ENCODE measurements at regions of chr17 and their contacts with region 1.

Region 1: GRCh38 chr17:7740481-7741001 is 23.0 kb downstream of the DNAH2 start:
- DNase-seq: no peak
- ATAC-seq: no peak
- H3K4me3 ChIP-seq: no peak overlapping the region
- H3K27ac ChIP-seq: no peak overlapping the region
- H3K4me1 ChIP-seq: peaks cover 5% of the 10 kb centered on the region; the same call in 1 of the 2 replicates
- H3K27me3 ChIP-seq: peaks cover 43% of the 10 kb centered on the region
- CTCF ChIP-seq: no peak
- POLR2A ChIP-seq: no peak
- RAD21 ChIP-seq: no peak

Region 2: DNA sequence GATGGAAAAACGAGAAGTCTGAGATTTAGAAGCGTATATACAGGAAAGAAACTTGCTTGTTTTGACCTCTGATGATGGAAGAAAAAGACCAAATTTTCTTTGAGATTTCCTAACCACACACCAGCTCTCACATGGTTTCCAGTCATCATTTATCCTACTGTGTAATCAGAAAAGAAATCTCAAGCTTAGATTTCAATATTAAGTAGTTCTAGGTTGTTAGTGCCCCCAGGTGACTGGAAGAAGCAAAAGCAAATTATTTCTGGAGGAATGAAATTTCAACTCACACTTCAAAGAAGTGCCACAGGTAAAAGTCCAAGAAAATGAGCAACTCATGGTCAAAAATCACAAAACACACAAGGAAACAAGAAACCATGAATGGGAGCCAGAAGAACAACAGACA is 41.7 kb after region 1 on chr17:
- CTCF ChIA-PET with region 1: interaction called, 34 read pairs
- POLR2A ChIA-PET with region 1: no interaction called
- dilution Hi-C with region 1: no loop called
- in situ Hi-C with region 1: loop called (anchors 5 kb)
- intact Hi-C with region 1: loop called (anchors 1 kb)
- DNase-seq: peak; percentile 61
- ATAC-seq: peak; percentile 56; the same call in 1 of the 2 replicates
- H3K4me3 ChIP-seq: no peak overlapping the region
- H3K27ac ChIP-seq: no peak overlapping the region
- H3K4me1 ChIP-seq: peaks cover 2% of the 10 kb centered on the region; the same call in 1 of the 2 replicates
- H3K27me3 ChIP-seq: peaks cover 19% of the 10 kb centered on the region
- CTCF ChIP-seq: peak; percentile 64
- POLR2A ChIP-seq: no peak
- RAD21 ChIP-seq: peak; percentile 66

Region 3: DNA sequence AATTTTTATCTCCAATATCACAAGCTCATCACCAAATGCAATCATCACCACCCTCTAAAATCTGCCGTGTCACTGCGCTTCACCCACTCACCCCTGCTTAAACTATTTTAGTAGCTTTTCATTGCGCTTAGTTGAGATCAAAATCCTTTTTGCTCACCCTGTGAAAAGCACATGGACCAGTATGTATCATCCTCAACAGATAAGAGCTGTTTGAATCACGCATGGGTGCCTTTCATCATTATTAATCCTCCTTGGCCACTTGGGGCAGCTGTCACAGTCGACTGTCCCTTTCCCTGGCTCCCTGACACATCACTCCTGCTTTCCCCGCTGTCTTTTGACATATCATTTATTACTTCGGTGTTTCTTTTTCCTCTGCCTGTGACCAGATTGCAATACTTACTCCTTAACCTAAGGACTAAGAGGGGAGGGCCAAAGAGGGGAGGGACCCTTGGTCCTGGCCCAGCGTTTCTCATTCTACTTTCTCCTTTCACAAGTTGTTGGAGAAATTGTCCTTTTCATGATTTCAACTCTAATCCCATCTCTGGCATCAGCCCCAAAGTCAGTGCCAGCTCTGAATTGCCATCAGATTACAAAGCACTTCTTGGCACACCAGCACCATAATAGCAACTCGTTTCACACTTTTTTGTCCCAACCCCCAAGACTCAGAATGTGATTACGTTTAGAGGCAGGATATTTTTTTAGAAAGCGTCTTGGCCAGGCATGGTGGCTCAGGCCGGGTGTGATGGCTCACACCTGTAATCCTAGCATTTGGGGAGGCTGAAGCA is 84.9 kb after region 1 on chr17:
- CTCF ChIA-PET with region 1: no interaction called
- POLR2A ChIA-PET with region 1: no interaction called
- dilution Hi-C with region 1: no loop called
- in situ Hi-C with region 1: loop called (anchors 5 kb)
- intact Hi-C with region 1: loop called (anchors 1 kb)
- DNase-seq: no peak
- ATAC-seq: peak; percentile 35
- H3K4me3 ChIP-seq: no peak overlapping the region
- H3K27ac ChIP-seq: no peak overlapping the region
- H3K4me1 ChIP-seq: no peaks in the 10 kb centered on the region; the same call in 1 of the 2 replicates
- H3K27me3 ChIP-seq: peaks cover 13% of the 10 kb centered on the region
- CTCF ChIP-seq: no peak
- POLR2A ChIP-seq: no peak
- RAD21 ChIP-seq: peak; percentile 21; the same call in 1 of the 2 replicates

Region 4: DNA sequence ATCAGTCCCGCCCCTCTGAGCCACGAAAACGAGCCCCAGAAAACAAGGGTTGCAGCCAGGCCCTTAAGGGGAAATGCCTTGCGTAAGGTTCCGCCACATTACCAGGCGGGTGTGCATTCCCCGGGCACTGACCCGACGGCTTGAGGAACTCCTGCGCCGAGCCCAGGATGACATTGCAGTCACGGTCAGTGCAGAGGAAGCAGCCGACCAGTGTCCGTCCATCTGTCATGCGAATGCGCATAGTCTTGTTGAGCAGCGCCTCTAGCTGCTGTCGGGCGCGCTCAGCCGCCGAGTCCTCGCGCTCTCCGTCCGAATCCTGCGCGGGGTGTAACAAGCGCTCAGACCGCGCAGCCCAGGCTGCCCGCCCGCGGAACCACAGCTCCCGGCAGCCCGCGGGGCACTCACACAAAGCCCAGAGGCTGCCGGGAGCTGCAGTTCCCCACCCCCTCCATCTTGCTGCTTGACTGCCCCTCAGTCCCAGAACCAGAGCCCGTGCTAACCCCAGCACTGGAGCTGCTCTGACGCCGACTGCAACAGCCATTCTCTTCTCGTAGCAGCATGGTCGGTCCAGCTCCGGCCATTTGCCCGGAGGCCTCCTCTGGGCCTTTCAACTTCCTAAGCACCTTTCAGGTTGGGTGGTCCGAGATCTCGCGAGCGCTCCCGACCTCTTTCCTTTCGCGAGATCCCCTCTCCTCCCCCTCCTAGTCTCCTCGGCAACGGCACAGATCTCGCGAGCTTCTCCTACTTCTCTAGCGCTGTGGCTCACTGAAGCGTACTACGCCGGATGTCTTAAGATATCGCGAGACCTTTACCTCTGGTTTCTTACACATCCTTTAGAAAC is 116.6 kb after region 1 on chr17 and contains the start of gene NAA38:
- CTCF ChIA-PET with region 1: interaction called, 3 read pairs
- POLR2A ChIA-PET with region 1: no interaction called
- dilution Hi-C with region 1: no loop called
- in situ Hi-C with region 1: no loop called
- intact Hi-C with region 1: loop called (anchors 1 kb)
- DNase-seq: peak; percentile 100
- ATAC-seq: peak; percentile 88
- H3K4me3 ChIP-seq: peak within 1 kb of the TSS; percentile 59
- H3K27ac ChIP-seq: peak within 1 kb of the TSS; percentile 94
- H3K4me1 ChIP-seq: peaks cover 20% of the 10 kb centered on the region
- H3K27me3 ChIP-seq: no peaks in the 10 kb centered on the region
- CTCF ChIP-seq: peak; percentile 51
- POLR2A ChIP-seq: peak; percentile 66; the same call in 1 of the 2 replicates
- RAD21 ChIP-seq: peak; percentile 38
- total RNA-seq, gene NAA38: 40.7 and 62.2 TPM in 2 replicates

Region 5: DNA sequence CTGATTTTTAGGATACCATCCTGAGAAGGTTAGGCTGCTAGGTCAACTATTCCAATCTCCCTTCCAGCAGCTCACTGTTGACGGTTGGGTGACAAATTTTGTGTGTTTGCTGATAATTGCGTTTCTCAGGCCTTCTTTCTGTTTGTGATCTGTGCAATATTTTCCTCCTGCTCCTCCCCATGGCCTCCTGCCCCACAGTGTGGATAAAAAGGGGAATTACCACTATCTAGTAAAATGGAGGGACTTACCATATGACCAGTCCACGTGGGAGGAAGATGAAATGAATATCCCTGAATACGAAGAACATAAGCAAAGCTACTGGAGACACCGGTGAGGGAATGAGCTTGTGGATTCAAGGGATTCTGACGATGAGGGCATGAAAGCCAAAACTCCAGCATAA is 157.2 kb after region 1 on chr17:
- CTCF ChIA-PET with region 1: no interaction called
- POLR2A ChIA-PET with region 1: no interaction called
- dilution Hi-C with region 1: no loop called
- in situ Hi-C with region 1: no loop called
- intact Hi-C with region 1: loop called (anchors 5 kb)
- DNase-seq: peak; percentile 77
- ATAC-seq: peak; percentile 90
- H3K4me3 ChIP-seq: no peak overlapping the region
- H3K27ac ChIP-seq: no peak overlapping the region
- H3K4me1 ChIP-seq: no peaks in the 10 kb centered on the region
- H3K27me3 ChIP-seq: no peaks in the 10 kb centered on the region
- CTCF ChIP-seq: peak; percentile 77
- POLR2A ChIP-seq: no peak
- RAD21 ChIP-seq: peak; percentile 88

Measured in IMR-90 (cell line).